ENCODE measurements at regions of chr3 and their contacts with region 1.

Region 1: GRCh38 chr3:107927361-107928083 is 163.3 kb downstream of the CD47 start:
- DNase-seq: peak; percentile 65
- H3K4me3 ChIP-seq: peak overlapping the region; percentile 52
- H3K27ac ChIP-seq: no peak overlapping the region
- H3K4me1 ChIP-seq: peaks cover 6% of the 10 kb centered on the region
- H3K27me3 ChIP-seq: peaks cover 43% of the 10 kb centered on the region
- CTCF ChIP-seq: peak; percentile 95

Region 2: GRCh38 chr3:107756649-107757048 is 170.9 kb before region 1 on chr3:
- CTCF ChIA-PET with region 1: no interaction called
- POLR2A ChIA-PET with region 1: no interaction called
- intact Hi-C with region 1: no loop called
- DNase-seq: no peak
- H3K4me3 ChIP-seq: no peak overlapping the region
- H3K27ac ChIP-seq: no peak overlapping the region
- H3K4me1 ChIP-seq: no peaks in the 10 kb centered on the region
- H3K27me3 ChIP-seq: no peaks in the 10 kb centered on the region
- CTCF ChIP-seq: no peak

Region 3: DNA sequence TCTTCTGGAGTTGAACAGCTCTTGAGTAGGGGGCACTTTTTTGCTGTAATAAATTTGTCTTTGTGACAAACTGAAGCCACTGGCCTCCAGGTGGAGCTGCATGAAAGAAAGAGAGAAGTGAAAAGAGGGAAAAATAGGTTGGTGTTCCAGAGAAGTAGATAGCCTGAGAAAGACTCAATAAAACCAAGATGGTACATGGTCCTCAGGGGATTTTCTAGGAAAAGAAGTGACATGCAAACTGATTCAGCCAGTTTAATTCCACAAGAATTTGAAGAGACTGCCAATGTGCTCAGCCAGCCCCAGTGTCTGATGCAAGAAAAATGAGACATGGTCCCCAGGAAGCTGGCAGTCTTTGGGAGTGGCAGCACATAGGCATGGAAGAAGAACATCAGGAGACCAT is 10.6 kb after region 1 on chr3:
- CTCF ChIA-PET with region 1: interaction called, 4 read pairs
- POLR2A ChIA-PET with region 1: interaction called, 16 read pairs
- intact Hi-C with region 1: no loop called
- DNase-seq: peak; percentile 53
- H3K4me3 ChIP-seq: no peak overlapping the region
- H3K27ac ChIP-seq: no peak overlapping the region
- H3K4me1 ChIP-seq: no peaks in the 10 kb centered on the region
- H3K27me3 ChIP-seq: peaks cover 9% of the 10 kb centered on the region
- CTCF ChIP-seq: peak; percentile 59

Region 4: GRCh38 chr3:108090701-108091451 is 163.4 kb after region 1 on chr3 and contains the start of gene CD47:
- CTCF ChIA-PET with region 1: no interaction called
- POLR2A ChIA-PET with region 1: no interaction called
- intact Hi-C with region 1: loop called (anchors 5 kb)
- DNase-seq: peak; percentile 90
- H3K4me3 ChIP-seq: peak within 1 kb of the TSS; percentile 87
- H3K27ac ChIP-seq: peak within 1 kb of the TSS; percentile 62
- H3K4me1 ChIP-seq: peaks cover 9% of the 10 kb centered on the region
- H3K27me3 ChIP-seq: no peaks in the 10 kb centered on the region
- CTCF ChIP-seq: no peak
- total RNA-seq, gene CD47: 28.2 and 34.7 TPM in 2 replicates

Region 5: GRCh38 chr3:109109574-109109973 is 1182.1 kb after region 1 on chr3:
- CTCF ChIA-PET with region 1: no interaction called
- POLR2A ChIA-PET with region 1: no interaction called
- intact Hi-C with region 1: no loop called
- DNase-seq: no peak
- H3K4me3 ChIP-seq: no peak overlapping the region
- H3K27ac ChIP-seq: no peak overlapping the region
- H3K4me1 ChIP-seq: no peaks in the 10 kb centered on the region
- H3K27me3 ChIP-seq: no peaks in the 10 kb centered on the region
- CTCF ChIP-seq: no peak

Measured in A673 (cell line).